Gastrocnemius medialis (tissue), 4 donors: ENCODE measurements at regions of chr7 and their contacts with region 1.

Region 1: GRCh38 chr7:54788664-54789063 is 29.7 kb upstream of the SEC61G start:
- DNase-seq: peak in 1 of 2 donors; percentile 51
- ATAC-seq: peak; percentile 91 to 98
- H3K4me3 ChIP-seq: no peak overlapping the region
- H3K27ac ChIP-seq: no peak overlapping the region
- H3K4me1 ChIP-seq: peaks cover 2 to 7% of the 10 kb centered on the region in 2 donors
- H3K27me3 ChIP-seq: no peaks in the 10 kb centered on the region
- CTCF ChIP-seq: peak; percentile 32 to 68 (median 55)
- POLR2A ChIP-seq: no peak

Region 2: DNA sequence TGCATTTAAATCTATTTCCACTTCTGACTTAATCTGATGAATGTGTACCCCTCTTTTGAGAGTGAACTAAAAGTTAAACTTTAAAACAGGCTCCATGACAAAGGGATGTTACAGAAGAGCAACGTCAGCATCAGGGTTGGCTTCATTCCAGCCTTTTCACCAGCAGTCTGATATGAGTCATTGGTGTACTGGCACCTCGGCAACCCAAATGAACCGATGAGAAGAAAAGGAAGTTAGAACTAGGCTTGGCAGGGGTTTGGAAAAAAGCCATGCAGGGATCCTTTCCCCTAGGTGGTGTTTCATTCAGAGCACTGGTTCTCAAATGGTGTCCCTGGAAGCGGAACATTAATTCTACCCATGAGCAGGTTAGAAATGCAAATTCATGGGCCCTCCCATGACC is 83.2 kb before region 1 on chr7:
- in situ Hi-C with region 1: no loop called
- intact Hi-C with region 1: no loop called
- DNase-seq: no peak
- ATAC-seq: no peak
- H3K4me3 ChIP-seq: no peak overlapping the region
- H3K27ac ChIP-seq: no peak overlapping the region
- H3K4me1 ChIP-seq: no peaks in the 10 kb centered on the region
- H3K27me3 ChIP-seq: no peaks in the 10 kb centered on the region
- CTCF ChIP-seq: no peak
- POLR2A ChIP-seq: no peak

Region 3: GRCh38 chr7:54839538-54840213 is 51.0 kb after region 1 on chr7:
- in situ Hi-C with region 1: loop called in 1 of 4 experiments (anchors 10 kb)
- intact Hi-C with region 1: loop called (anchors 2 kb)
- DNase-seq: peak; percentile 53 to 76
- ATAC-seq: peak; percentile 54 to 60
- H3K4me3 ChIP-seq: no peak overlapping the region
- H3K27ac ChIP-seq: no peak overlapping the region
- H3K4me1 ChIP-seq: peaks cover 12 to 16% of the 10 kb centered on the region in 2 donors
- H3K27me3 ChIP-seq: no peaks in the 10 kb centered on the region
- CTCF ChIP-seq: peak; percentile 19 to 58 (median 52)
- POLR2A ChIP-seq: no peak